ENCODE measurements at regions of chr5 and their contacts with region 1.

Region 1: DNA sequence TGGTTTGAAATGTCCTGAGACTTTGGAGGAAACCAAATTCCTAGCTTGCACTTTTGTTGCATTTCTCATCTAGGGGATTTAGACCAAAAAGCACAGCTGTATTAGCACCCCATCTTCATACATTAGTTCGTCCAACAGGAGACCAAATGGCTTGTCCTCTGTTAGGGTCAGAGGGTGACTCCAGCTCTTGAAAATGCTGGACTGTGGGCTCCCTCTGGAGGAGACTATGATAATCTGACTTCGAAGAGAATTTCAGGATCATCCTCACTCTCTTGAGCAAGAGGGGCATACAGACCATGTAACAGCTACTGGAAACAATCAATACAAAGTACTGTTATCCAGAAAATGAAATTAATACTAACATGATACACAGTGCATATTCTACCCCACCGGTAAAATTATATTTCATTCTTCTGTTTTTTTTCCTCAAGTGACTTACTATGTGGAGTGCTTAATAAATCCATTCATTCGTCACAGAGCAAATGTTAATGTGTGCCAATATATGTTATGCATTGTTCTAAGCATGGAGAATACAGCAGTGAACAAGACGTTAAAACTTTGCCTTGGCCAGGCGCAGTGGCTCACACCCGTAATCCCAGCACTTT is 63.7 kb upstream of the PPP2CA start:
- DNase-seq: peak; percentile 79
- H3K4me3 ChIP-seq: no peak overlapping the region
- H3K27ac ChIP-seq: no peak overlapping the region
- H3K4me1 ChIP-seq: no peaks in the 10 kb centered on the region
- H3K27me3 ChIP-seq: peaks cover 3 to 4% of the 10 kb centered on the region in 2 experiments
- CTCF ChIP-seq: peak; percentile 50 to 58
- POLR2A ChIP-seq: no peak

Region 2: GRCh38 chr5:134046801-134047686 is 242.6 kb before region 1 on chr5:
- CTCF ChIA-PET with region 1: no interaction called
- POLR2A ChIA-PET with region 1: no interaction called
- dilution Hi-C with region 1: no loop called
- intact Hi-C with region 1: no loop called
- DNase-seq: no peak
- H3K4me3 ChIP-seq: no peak overlapping the region
- H3K27ac ChIP-seq: no peak overlapping the region
- H3K4me1 ChIP-seq: no peaks in the 10 kb centered on the region
- H3K27me3 ChIP-seq: peaks cover 0 to 3% of the 10 kb centered on the region in 2 experiments
- CTCF ChIP-seq: no peak
- POLR2A ChIP-seq: no peak

Region 3: DNA sequence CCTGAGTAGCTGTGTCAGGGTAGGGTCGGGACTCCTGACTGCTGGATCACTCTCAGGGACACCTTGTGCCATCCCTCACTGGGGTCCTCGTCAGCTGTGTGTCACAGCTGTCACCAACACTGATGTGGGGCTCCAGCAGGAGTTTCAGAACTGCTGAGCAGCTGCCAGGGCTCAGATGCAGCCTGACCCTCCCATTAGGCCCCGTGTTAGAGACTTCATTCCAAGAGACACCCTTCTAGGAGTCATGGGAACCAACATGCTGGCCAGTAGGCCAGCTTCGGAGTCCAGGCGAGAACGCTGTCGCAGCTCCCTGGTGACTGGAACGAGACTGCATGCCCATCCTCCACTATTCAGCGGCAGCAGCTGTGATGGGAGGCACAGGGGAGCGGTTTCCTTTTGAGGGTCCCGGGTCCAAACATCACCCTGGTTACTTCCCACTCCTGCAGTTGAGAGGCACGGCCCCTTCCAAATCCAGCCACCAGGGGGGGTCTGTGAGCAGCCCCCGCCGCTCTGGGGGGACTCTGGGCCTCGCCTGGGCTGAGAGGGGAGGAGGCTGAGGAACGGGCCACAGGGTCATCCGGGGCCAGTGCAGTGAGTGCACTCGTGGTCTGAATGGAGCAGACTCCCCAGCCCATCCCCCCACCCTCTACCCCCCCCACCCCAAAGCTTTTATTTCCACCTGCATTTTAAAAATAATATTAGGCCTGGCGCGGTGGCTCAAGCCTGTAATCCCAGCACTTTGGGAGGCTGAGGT is 187.7 kb before region 1 on chr5:
- CTCF ChIA-PET with region 1: interaction called, 24 read pairs
- POLR2A ChIA-PET with region 1: no interaction called
- dilution Hi-C with region 1: no loop called
- intact Hi-C with region 1: loop called (anchors 1 kb)
- DNase-seq: peak; percentile 48
- H3K4me3 ChIP-seq: no peak overlapping the region
- H3K27ac ChIP-seq: no peak overlapping the region
- H3K4me1 ChIP-seq: no peaks in the 10 kb centered on the region
- H3K27me3 ChIP-seq: peaks cover 0 to under 1% of the 10 kb centered on the region in 2 experiments
- CTCF ChIP-seq: peak; percentile 85 to 97
- POLR2A ChIP-seq: no peak

Region 4: DNA sequence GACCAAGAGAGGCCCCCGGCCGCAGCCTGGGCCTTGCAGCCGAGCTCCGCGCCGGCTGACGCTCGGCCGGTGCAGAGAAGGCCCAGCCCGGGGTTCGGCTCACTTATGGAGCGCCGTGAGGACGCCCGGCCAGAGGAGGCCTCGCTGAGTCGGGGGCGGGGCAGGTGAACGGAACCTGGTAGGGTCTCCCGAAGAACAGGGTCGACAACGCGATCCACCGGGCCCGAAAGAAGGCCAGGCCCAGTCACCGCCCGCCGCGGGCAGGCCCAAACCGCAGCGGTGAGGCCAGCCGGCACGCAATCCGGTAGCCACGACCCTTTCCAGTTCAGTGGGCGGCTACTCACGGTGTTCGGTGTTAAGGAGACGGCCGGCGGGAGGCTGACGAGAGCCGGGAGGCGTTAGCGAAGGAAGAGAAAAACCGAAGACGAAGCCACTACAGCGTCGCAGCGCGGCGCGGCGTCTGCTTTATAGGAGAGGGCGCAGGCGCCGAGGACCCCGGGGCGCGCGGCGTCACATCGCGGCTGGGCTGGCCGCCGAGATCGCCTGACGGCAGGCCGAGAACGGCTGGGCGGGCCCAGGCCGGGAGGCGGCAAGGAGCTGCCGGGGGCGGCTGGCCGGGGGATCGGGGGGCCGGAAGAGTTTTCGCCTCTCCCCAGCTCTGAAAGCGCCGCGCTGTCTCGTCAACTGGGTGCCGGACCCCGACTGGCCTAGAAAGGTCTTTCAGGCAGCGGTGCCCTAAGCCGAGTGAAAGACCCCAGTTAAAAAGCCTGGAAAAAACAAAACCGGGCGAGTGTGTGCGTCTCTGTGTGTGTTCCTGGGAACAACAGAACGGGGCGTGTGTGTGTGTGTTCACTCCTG is 112.9 kb before region 1 on chr5 and contains the start of gene SKP1:
- CTCF ChIA-PET with region 1: interaction called, 191 read pairs
- POLR2A ChIA-PET with region 1: interaction called, 12 read pairs
- dilution Hi-C with region 1: no loop called
- intact Hi-C with region 1: loop called (anchors 2 kb)
- DNase-seq: peak; percentile 86
- H3K4me3 ChIP-seq: peak within 1 kb of the TSS; percentile 91 to 99 (median 98)
- H3K27ac ChIP-seq: peak within 1 kb of the TSS; percentile 85
- H3K4me1 ChIP-seq: peaks cover 18% of the 10 kb centered on the region
- H3K27me3 ChIP-seq: no peaks in the 10 kb centered on the region
- CTCF ChIP-seq: no peak
- POLR2A ChIP-seq: peak; percentile 99
- total RNA-seq, gene SKP1: 311 and 320 TPM in 2 replicates

Region 5: DNA sequence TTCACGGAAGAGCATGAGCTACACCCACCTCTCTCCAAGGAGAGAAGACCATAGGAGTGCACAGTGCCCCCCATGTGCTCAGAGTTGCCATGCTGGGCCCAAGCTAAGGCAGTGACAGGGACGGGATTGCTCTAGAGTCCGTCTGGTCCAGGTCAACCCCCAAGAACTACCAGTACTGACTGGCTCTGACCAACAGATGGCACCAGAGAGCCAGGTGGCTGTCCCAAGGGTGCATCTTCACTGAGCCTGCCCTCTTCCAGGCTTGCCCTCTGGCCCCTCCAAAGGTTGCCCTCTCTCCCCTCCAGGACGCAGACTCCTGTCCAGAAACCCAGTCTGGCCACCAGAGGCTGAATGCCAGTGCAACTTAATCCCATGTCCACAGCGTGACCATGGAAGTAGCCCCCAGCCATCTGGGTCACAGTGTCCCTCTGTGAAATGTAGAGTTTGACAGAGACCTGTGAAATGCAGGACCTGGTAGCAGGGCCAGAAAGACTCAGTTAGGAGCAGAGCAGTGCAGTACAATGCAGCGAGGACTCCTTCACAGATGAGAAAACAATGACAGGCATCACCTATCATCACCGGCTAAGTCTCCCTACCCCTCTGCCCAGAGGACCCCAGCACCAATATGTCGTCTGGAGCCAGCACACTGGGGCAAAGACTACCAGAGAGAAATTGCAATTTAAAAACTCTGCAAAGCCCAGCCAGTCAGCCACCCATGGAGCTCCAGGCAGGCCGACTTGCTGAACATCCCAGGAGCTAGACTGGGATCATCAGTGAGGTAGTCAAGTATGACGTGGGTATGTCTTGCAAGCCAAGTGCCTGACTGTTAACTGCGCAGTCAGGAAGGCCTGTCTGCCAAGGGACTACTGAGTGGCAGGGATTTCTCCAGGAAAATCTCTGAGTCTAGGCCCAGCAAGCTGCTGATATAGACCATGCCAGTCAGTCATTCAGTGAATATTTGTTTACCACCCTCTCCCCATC is 105.2 kb before region 1 on chr5:
- CTCF ChIA-PET with region 1: interaction called, 191 read pairs
- POLR2A ChIA-PET with region 1: no interaction called
- dilution Hi-C with region 1: no loop called
- intact Hi-C with region 1: loop called (anchors 1 kb)
- DNase-seq: peak; percentile 55
- H3K4me3 ChIP-seq: no peak overlapping the region
- H3K27ac ChIP-seq: no peak overlapping the region
- H3K4me1 ChIP-seq: no peaks in the 10 kb centered on the region
- H3K27me3 ChIP-seq: no peaks in the 10 kb centered on the region
- CTCF ChIP-seq: peak; percentile 76 to 94
- POLR2A ChIP-seq: no peak

Region 6: GRCh38 chr5:134206627-134207160 is 82.9 kb before region 1 on chr5:
- CTCF ChIA-PET with region 1: interaction called, 10 read pairs
- POLR2A ChIA-PET with region 1: no interaction called
- dilution Hi-C with region 1: no loop called
- intact Hi-C with region 1: no loop called
- DNase-seq: no peak
- H3K4me3 ChIP-seq: no peak overlapping the region
- H3K27ac ChIP-seq: no peak overlapping the region
- H3K4me1 ChIP-seq: no peaks in the 10 kb centered on the region
- H3K27me3 ChIP-seq: no peaks in the 10 kb centered on the region
- CTCF ChIP-seq: no peak
- POLR2A ChIP-seq: no peak

Region 7: GRCh38 chr5:134225618-134226440 is 63.8 kb before region 1 on chr5 and contains the start of gene PPP2CA:
- CTCF ChIA-PET with region 1: interaction called, 30 read pairs
- POLR2A ChIA-PET with region 1: interaction called, 4 read pairs
- dilution Hi-C with region 1: no loop called
- intact Hi-C with region 1: loop called (anchors 1 kb)
- DNase-seq: peak; percentile 100
- H3K4me3 ChIP-seq: peak within 1 kb of the TSS; percentile 63 to 91 (median 84)
- H3K27ac ChIP-seq: peak within 1 kb of the TSS; percentile 96
- H3K4me1 ChIP-seq: peaks cover 29% of the 10 kb centered on the region
- H3K27me3 ChIP-seq: no peaks in the 10 kb centered on the region
- CTCF ChIP-seq: peak in 1 of 2 donors; percentile 5
- POLR2A ChIP-seq: peak; percentile 18
- total RNA-seq, gene PPP2CA: 163 and 183 TPM in 2 replicates